Caco-2 (cell line): ENCODE measurements at regions of chr13 and their contacts with region 1.

Region 1: DNA sequence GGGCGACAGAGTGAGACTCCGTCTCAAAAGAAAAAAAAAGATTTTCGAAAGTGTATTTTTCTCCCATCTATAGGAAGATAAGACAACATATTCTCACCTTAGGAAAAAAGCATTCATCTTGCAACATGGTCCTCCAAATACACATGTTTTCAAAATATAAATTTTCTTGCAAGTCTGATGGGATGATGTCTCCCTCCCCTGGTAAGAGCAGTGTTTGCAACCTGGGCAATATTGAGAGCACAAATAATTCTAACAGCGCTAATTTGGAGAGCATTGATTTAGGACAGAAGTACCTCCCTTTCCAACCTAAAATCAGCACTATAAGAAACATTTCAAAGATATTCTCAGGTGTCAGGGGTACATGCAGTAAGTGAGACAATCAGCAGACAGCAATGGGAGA is 61.0 kb upstream of the SHISA2 start:
- DNase-seq: peak in 1 of 2 experiments; percentile 16
- H3K4me3 ChIP-seq: no peak overlapping the region
- H3K4me3 Mint-ChIP-seq: no peak overlapping the region
- H3K27ac Mint-ChIP-seq: no peak overlapping the region
- H3K4me1 ChIP-seq: no peaks in the 10 kb centered on the region
- H3K4me1 Mint-ChIP-seq: no peaks in the 10 kb centered on the region
- H3K27me3 ChIP-seq: no peaks in the 10 kb centered on the region; the same call in 1 of the 2 replicates
- H3K27me3 Mint-ChIP-seq: peaks cover 15% of the 10 kb centered on the region
- CTCF ChIP-seq: peak; percentile 37 to 42

Region 2: GRCh38 chr13:26074706-26075105 is 38.1 kb before region 1 on chr13:
- CTCF ChIA-PET with region 1: no interaction called
- POLR2A ChIA-PET with region 1: no interaction called
- intact Hi-C with region 1: loop called (anchors 2 kb)
- DNase-seq: peak; percentile 62
- H3K4me3 ChIP-seq: no peak overlapping the region
- H3K4me3 Mint-ChIP-seq: no peak overlapping the region
- H3K27ac Mint-ChIP-seq: no peak overlapping the region
- H3K4me1 ChIP-seq: peaks cover 4% of the 10 kb centered on the region; the same call in 1 of the 2 replicates
- H3K4me1 Mint-ChIP-seq: no peaks in the 10 kb centered on the region
- H3K27me3 ChIP-seq: no peaks in the 10 kb centered on the region
- H3K27me3 Mint-ChIP-seq: peaks cover 12% of the 10 kb centered on the region
- CTCF ChIP-seq: peak; percentile 13

Region 3: GRCh38 chr13:26095338-26095737 is 17.5 kb before region 1 on chr13:
- CTCF ChIA-PET with region 1: no interaction called
- POLR2A ChIA-PET with region 1: no interaction called
- intact Hi-C with region 1: no loop called
- DNase-seq: no peak
- H3K4me3 ChIP-seq: no peak overlapping the region
- H3K4me3 Mint-ChIP-seq: no peak overlapping the region
- H3K27ac Mint-ChIP-seq: no peak overlapping the region
- H3K4me1 ChIP-seq: no peaks in the 10 kb centered on the region
- H3K4me1 Mint-ChIP-seq: no peaks in the 10 kb centered on the region
- H3K27me3 ChIP-seq: peaks cover 2% of the 10 kb centered on the region
- H3K27me3 Mint-ChIP-seq: peaks cover 17% of the 10 kb centered on the region
- CTCF ChIP-seq: no peak

Region 4: DNA sequence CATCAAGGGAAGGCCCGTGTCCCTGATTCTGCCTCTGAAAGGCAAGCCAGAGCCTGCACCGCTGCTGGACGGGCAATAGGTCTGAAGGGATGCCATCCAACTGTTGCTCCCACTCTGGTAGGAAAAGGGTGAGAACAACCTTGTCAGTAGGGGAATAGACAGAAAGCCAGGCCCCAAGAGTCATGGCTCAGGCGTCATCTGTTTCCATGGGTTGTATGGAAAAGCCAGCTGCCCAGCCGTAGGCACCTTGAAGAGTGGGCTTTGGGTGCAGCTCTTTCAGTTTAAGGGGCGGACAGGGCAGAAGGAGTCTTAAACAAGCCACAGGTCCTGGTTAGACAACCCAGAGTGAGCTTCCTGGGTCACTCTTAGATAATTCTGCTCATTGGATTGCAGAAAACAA is 42.7 kb after region 1 on chr13:
- CTCF ChIA-PET with region 1: no interaction called
- POLR2A ChIA-PET with region 1: no interaction called
- intact Hi-C with region 1: no loop called
- DNase-seq: no peak
- H3K4me3 ChIP-seq: no peak overlapping the region
- H3K4me3 Mint-ChIP-seq: no peak overlapping the region
- H3K27ac Mint-ChIP-seq: no peak overlapping the region
- H3K4me1 ChIP-seq: no peaks in the 10 kb centered on the region
- H3K4me1 Mint-ChIP-seq: no peaks in the 10 kb centered on the region
- H3K27me3 ChIP-seq: no peaks in the 10 kb centered on the region; the same call in 1 of the 2 replicates
- H3K27me3 Mint-ChIP-seq: peaks cover 28% of the 10 kb centered on the region
- CTCF ChIP-seq: no peak